ENCODE measurements at regions of chr1 and their contacts with region 1.

Region 1: DNA sequence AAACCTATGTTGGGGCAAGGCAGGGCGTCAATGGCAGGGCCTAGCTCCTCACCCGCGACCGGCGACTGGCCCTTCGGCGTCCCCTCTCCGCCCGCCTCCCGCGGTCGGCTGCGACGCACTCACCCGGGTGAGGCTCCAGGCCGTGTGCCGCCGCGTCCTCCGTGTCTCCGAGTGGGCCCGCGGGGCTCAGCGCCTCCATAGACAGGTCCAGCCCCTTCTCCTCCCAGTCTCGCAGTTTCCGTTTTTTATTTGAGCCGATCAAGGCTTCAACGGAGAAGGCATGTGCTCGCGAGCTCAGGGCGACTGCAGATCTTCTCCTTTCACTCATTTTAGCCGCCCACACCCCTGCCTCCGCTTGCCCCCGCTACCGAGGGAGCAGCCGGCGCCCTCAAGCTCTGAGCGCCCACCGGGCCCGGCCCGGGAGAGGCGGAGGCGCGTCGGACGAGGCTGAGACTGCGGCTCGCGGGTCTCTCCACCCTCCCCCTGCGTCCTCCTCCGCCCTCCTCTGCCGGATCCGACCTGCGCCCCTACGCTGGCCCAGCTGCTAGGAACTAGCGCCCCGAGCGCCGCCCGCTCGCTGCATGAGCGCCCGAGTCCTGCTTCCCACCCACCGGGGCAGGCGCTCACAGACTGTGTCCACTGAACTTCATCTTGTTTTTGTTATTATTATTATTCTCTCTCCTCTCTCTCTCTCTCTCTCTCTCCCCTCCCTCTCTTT is 516 bp downstream of the TBX15 start:
- DNase-seq: no peak
- ATAC-seq: peak; percentile 16
- H3K4me3 Mint-ChIP-seq: no peak overlapping the region
- H3K27ac Mint-ChIP-seq: no peak overlapping the region
- H3K4me1 Mint-ChIP-seq: peaks cover 26% of the 10 kb centered on the region
- H3K27me3 Mint-ChIP-seq: peaks cover 89% of the 10 kb centered on the region

Region 2: DNA sequence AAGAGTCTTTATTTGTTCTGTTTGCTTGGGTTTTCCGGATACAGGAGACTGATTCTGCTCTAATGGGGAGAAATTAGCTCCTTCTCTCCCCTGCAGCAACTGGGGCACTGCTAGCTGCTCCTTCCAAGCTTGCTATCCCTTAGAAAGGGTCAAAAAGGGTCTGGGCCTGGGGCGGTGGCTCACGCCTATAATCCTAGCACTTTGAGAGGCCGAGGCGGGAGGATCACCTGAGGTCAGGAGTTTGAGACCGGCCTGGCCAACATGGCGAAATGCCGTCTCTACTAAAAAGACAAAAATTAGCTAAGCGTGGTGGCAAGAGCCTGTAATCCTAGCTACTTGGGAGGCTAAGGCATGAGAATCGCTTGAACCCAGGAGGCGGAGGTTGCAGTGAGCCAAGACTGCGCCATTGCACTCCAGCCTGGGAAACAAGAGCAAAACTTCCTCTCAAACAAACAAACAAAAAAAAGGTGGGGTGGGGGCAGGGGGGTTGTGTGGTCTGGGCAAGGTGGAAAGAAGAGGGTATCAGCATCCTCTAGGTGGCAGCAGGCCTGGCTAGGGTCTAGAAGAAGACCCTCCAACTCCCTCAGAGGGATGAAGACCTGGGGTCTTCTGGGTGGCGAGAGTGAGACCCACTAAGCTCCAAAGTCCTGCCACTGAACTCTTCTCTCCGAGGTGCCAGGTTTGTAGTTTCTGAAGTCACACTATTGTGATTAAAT is 15.9 kb after region 1 on chr1:
- CTCF ChIA-PET with region 1: interaction called, 5 read pairs
- POLR2A ChIA-PET with region 1: no interaction called
- intact Hi-C with region 1: loop called (anchors 1 to 2 kb)
- DNase-seq: no peak
- ATAC-seq: no peak
- H3K4me3 Mint-ChIP-seq: no peak overlapping the region
- H3K27ac Mint-ChIP-seq: no peak overlapping the region
- H3K4me1 Mint-ChIP-seq: peaks cover 15% of the 10 kb centered on the region
- H3K27me3 Mint-ChIP-seq: peaks cover 76% of the 10 kb centered on the region

Measured in activated CD4-positive, alpha-beta T cell treated with anti-CD3 and anti-CD28 coated beads for 36 hours (primary cell).